Activated CD8-positive, alpha-beta T cell treated with anti-CD3 and anti-CD28 coated beads, Interleukin-2, amount 10 ng/mL, durations not matched to agents 7 days and 5 days (primary cell): ENCODE measurements at regions of chr3 and their contacts with region 1.

Region 1: DNA sequence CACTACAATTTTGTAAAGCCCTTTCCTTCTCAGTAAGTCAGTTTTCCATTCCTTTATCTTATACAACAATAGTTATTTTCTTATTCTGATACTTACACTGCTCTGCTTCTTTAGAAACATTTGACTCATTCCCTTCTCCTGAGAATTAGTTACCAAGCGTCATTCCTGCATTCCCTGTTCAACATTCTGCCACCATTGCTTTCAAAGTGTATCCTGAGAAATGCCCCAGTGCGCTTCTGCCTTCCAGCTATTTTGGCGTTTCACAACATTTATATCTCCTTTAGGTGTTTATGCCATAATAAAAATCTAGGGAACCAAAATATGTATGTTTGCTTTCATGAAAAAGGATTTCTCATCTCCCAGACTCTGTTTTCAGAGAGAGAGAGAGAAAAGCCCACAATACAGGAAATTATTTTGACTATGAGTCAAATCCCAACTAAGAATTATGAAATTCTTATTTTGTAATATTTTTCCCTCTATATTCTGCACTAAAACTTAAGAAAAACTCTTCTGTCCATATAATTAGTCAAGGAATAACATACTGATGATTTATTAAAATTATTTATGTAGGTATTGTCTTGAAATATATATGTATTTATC is 118.2 kb upstream of the RAP2B start:
- DNase-seq: no peak
- ATAC-seq: no peak
- H3K4me3 Mint-ChIP-seq: peak overlapping the region; percentile 15
- H3K27ac Mint-ChIP-seq: no peak overlapping the region
- H3K4me1 Mint-ChIP-seq: peaks cover 6% of the 10 kb centered on the region
- H3K27me3 Mint-ChIP-seq: peaks cover 7% of the 10 kb centered on the region

Region 2: DNA sequence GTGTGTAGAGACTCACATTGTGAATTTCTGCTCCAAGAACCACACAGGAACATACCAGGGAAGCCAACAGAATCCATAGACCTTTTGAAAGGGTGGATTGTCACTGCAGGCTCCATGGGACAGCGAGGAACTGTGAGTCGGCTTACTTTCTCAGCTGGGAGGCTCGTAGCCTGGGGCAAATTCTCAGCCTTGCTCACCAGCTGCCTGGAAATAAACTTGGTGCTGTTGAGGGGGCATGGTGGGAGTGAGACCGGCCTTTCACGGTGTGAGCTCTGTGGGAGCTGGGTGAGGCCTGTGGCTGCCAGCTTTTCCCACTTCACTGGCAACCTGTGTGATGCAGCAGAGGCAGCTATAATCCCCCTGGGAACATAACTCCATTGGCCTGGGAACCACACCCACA is 355.5 kb before region 1 on chr3:
- CTCF ChIA-PET with region 1: no interaction called
- POLR2A ChIA-PET with region 1: no interaction called
- DNase-seq: no peak
- ATAC-seq: no peak
- H3K4me3 Mint-ChIP-seq: no peak overlapping the region
- H3K27ac Mint-ChIP-seq: no peak overlapping the region
- H3K4me1 Mint-ChIP-seq: no peaks in the 10 kb centered on the region
- H3K27me3 Mint-ChIP-seq: peaks cover 2% of the 10 kb centered on the region

Region 3: GRCh38 chr3:153161138-153161713 is 117.4 kb after region 1 on chr3:
- CTCF ChIA-PET with region 1: interaction called, 24 read pairs
- POLR2A ChIA-PET with region 1: interaction called, 3 read pairs
- DNase-seq: peak; percentile 96
- ATAC-seq: peak; percentile 85
- H3K4me3 Mint-ChIP-seq: peak overlapping the region; percentile 88
- H3K27ac Mint-ChIP-seq: peak overlapping the region; percentile 97
- H3K4me1 Mint-ChIP-seq: peaks cover 38% of the 10 kb centered on the region
- H3K27me3 Mint-ChIP-seq: no peaks in the 10 kb centered on the region

Region 4: GRCh38 chr3:153285194-153285641 is 241.4 kb after region 1 on chr3:
- CTCF ChIA-PET with region 1: interaction called, 12 read pairs
- POLR2A ChIA-PET with region 1: no interaction called
- DNase-seq: no peak
- ATAC-seq: no peak
- H3K4me3 Mint-ChIP-seq: no peak overlapping the region
- H3K27ac Mint-ChIP-seq: no peak overlapping the region
- H3K4me1 Mint-ChIP-seq: peaks cover 37% of the 10 kb centered on the region
- H3K27me3 Mint-ChIP-seq: no peaks in the 10 kb centered on the region

Region 5: DNA sequence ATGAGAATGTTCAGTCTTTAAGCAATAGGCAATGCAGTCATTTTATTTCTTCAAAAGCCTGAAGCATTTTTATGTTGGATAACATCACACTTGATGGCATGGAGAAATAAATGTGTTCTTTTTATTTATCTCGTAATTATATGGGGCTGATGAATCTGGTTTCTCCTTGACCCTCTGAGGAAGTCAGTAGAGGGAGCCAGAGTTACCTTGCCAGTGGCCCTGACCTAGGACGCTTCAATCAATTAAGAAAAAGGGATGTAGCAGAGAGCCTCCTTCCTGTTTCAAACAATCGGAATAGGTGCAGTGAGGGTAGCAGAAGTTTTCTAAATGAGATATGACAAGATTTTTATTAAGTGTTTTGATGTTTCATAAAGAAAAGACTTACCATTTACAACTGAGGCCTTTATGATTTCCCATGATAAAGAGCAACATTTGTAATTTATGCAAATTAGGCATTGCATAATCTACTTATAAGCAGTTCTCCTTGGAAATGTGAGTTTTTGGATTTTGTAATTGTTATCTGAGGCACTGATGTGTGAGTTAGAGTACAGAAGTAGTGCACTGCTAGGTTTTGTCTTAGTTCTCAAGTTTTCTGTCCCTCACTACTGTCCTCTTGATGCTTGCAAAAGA is 247.3 kb after region 1 on chr3:
- CTCF ChIA-PET with region 1: interaction called, 12 read pairs
- POLR2A ChIA-PET with region 1: no interaction called
- DNase-seq: no peak
- ATAC-seq: peak; percentile 44
- H3K4me3 Mint-ChIP-seq: no peak overlapping the region
- H3K27ac Mint-ChIP-seq: no peak overlapping the region
- H3K4me1 Mint-ChIP-seq: peaks cover 30% of the 10 kb centered on the region
- H3K27me3 Mint-ChIP-seq: no peaks in the 10 kb centered on the region

Region 6: GRCh38 chr3:153768561-153769469 is 725.0 kb after region 1 on chr3:
- CTCF ChIA-PET with region 1: interaction called, 10 read pairs
- POLR2A ChIA-PET with region 1: no interaction called
- DNase-seq: peak; percentile 56
- ATAC-seq: peak; percentile 88
- H3K4me3 Mint-ChIP-seq: no peak overlapping the region
- H3K27ac Mint-ChIP-seq: no peak overlapping the region
- H3K4me1 Mint-ChIP-seq: no peaks in the 10 kb centered on the region
- H3K27me3 Mint-ChIP-seq: peaks cover 14% of the 10 kb centered on the region